Colonic mucosa (tissue), 4 donors: ENCODE measurements at regions of chr11 and their contacts with region 1.

Region 1: DNA sequence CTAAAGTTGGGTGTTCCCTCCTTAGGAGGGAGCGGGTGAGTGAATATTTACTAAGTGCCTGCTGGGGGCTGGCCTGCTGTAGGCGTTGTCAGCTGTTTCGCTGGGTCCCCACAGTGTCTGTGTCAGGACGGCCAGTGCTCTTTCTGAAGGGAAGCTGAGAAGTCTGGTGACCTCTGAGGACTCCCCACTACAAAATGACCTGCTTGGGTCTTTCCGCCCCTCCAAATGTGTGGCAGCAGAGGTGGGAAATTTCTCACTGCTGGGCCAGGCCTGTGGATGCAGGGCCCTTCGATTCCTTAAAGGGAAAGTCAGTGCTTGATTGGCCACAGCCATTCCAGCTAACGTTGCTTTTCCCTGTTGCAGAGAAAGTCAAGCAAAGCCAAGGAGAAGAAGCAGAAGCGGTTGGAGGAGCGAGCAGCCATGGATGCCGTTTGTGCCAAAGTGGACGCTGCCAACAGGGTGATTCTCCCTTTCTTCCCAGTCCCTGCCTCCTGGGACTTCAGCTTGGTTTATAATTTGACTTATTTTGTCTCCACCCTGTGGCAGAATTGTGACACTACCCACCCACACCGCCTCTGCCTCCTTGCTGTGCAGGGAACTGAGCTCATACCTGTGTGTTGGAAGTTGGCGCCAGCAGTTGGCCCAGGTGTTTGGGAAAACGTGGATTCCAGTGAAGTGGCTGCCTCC is 6.8 kb downstream of the NAA40 start:
- DNase-seq: peak; percentile 77
- H3K4me3 ChIP-seq: no peak overlapping the region
- H3K27ac ChIP-seq: no peak overlapping the region
- H3K4me1 ChIP-seq: peaks cover 3% of the 10 kb centered on the region
- H3K27me3 ChIP-seq: no peaks in the 10 kb centered on the region
- CTCF ChIP-seq: peak; percentile 74

Region 2: DNA sequence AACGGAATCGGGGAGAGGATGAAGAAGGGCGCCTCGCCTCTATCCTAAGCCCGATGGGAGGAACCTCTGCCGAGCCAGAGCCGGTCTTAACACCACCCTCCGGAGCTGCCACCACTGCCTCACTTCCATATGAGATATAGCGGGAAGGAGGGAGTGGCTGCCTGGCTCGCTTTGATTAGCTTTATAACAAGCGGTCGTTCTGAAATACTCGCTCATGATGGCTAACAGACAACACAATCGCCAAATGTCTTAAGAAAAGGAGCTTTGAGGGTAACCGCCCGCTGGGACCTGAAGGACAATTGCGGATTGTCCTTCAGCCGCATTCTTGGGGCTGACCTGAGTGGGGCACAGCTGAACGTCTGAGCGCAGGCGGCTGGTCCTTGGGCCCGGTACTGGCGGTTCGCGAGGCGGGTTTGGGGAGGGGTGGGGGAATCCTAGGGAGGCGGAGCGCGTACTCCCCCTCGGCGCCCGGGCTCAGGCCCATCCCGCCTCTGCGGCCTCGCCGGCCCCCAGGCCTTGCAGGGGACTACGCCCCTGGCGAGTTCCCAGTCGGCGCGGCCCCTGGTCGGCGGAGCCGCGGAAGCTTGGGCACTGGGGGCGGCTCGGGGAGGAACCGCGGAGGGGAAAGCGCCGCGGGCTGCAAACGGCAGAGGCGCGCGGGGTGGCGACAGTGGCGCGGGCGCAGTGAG is 454.9 kb before region 1 on chr11 and contains the start of gene PLAAT5:
- intact Hi-C with region 1: no loop called
- DNase-seq: peak; percentile 27
- H3K4me3 ChIP-seq: peak within 1 kb of the TSS; percentile 42
- H3K27ac ChIP-seq: peak within 1 kb of the TSS; percentile 20
- H3K4me1 ChIP-seq: no peaks in the 10 kb centered on the region
- H3K27me3 ChIP-seq: peaks cover 9% of the 10 kb centered on the region
- CTCF ChIP-seq: no peak
- total RNA-seq, gene PLAAT5: 0.40 TPM in 1 of 2 donors, not detected in the other

Region 3: GRCh38 chr11:63768237-63769043 is 177.2 kb before region 1 on chr11 and contains the start of gene ZFTA:
- intact Hi-C with region 1: loop called (anchors 5 kb)
- DNase-seq: peak; percentile 71
- H3K4me3 ChIP-seq: peak within 1 kb of the TSS; percentile 79
- H3K27ac ChIP-seq: peak within 1 kb of the TSS; percentile 67
- H3K4me1 ChIP-seq: peaks cover 27% of the 10 kb centered on the region
- H3K27me3 ChIP-seq: peaks cover 7% of the 10 kb centered on the region
- CTCF ChIP-seq: no peak
- total RNA-seq, gene ZFTA: 4.8 to 7.0 TPM